ENCODE measurements at regions of chr14 and their contacts with region 1.

Region 1: GRCh38 chr14:24332268-24332993 is 2.4 kb downstream of the ADCY4 start:
- DNase-seq: peak; percentile 94
- H3K4me3 ChIP-seq: peak overlapping the region in 1 of 2 experiments; percentile 30; a peak in 3 of 4 replicates
- H3K27ac ChIP-seq: no peak overlapping the region
- H3K4me1 ChIP-seq: peaks cover 0 to 21% of the 10 kb centered on the region in 2 experiments; a peak in 1 of 4 replicates
- H3K27me3 ChIP-seq: peaks cover 31% of the 10 kb centered on the region
- CTCF ChIP-seq: peak; percentile 68
- EP300 ChIP-seq: no peak
- RAD21 ChIP-seq: peak; percentile 59

Region 2: DNA sequence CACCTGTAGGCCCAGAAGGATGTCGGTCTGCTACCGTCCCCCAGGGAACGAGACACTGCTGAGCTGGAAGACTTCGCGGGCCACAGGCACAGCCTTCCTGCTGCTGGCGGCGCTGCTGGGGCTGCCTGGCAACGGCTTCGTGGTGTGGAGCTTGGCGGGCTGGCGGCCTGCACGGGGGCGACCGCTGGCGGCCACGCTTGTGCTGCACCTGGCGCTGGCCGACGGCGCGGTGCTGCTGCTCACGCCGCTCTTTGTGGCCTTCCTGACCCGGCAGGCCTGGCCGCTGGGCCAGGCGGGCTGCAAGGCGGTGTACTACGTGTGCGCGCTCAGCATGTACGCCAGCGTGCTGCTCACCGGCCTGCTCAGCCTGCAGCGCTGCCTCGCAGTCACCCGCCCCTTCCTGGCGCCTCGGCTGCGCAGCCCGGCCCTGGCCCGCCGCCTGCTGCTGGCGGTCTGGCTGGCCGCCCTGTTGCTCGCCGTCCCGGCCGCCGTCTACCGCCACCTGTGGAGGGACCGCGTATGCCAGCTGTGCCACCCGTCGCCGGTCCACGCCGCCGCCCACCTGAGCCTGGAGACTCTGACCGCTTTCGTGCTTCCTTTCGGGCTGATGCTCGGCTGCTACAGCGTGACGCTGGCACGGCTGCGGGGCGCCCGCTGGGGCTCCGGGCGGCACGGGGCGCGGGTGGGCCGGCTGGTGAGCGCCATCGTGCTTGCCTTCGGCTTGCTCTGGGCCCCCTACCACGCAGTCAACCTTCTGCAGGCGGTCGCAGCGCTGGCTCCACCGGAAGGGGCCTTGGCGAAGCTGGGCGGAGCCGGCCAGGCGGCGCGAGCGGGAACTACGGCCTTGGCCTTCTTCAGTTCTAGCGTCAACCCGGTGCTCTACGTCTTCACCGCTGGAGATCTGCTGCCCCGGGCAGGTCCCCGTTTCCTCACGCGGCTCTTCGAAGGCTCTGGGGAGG is 21.5 kb before region 1 on chr14 and contains the start of gene LTB4R:
- CTCF ChIA-PET with region 1: interaction called, 115 read pairs
- POLR2A ChIA-PET with region 1: no interaction called
- DNase-seq: no peak
- H3K4me3 ChIP-seq: no peak within 1 kb of the TSS
- H3K27ac ChIP-seq: no peak within 1 kb of the TSS
- H3K4me1 ChIP-seq: peaks cover 0 to 2% of the 10 kb centered on the region in 2 experiments; a peak in 1 of 4 replicates
- H3K27me3 ChIP-seq: no peaks in the 10 kb centered on the region
- CTCF ChIP-seq: no peak
- EP300 ChIP-seq: no peak
- RAD21 ChIP-seq: no peak
- polyA plus RNA-seq, gene LTB4R: 11.9 and 14.0 TPM in 2 replicates

Region 3: GRCh38 chr14:24315807-24316603 is 16.4 kb before region 1 on chr14:
- CTCF ChIA-PET with region 1: interaction called, 115 read pairs
- POLR2A ChIA-PET with region 1: interaction called, 3 read pairs
- DNase-seq: peak; percentile 60
- H3K4me3 ChIP-seq: no peak overlapping the region
- H3K27ac ChIP-seq: no peak overlapping the region
- H3K4me1 ChIP-seq: peaks cover 0 to 8% of the 10 kb centered on the region in 2 experiments; a peak in 1 of 4 replicates
- H3K27me3 ChIP-seq: peaks cover 12% of the 10 kb centered on the region; the same call in 1 of the 2 replicates
- CTCF ChIP-seq: no peak
- EP300 ChIP-seq: no peak
- RAD21 ChIP-seq: no peak

Region 4: DNA sequence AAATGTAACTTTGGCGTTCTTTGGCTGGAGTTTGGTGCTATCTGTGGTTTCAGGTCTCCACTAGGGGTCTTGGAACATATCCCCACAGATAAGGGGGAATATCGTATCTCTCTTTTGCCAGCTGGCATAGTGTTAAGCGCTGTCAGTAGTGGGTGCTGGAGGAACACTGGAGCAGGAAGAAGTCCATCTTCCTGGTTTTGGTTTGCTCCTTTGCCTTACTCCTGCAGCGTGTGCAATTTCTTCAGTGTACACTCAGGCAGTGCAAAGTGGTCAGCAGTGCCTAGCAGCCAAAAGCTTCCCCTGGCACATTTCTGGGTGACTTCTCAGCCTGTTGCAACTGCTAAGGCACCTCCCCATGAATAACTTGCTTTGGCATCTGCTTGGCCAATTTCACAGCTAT is 19.1 kb after region 1 on chr14:
- CTCF ChIA-PET with region 1: interaction called, 98 read pairs
- POLR2A ChIA-PET with region 1: no interaction called
- DNase-seq: no peak
- H3K4me3 ChIP-seq: no peak overlapping the region
- H3K27ac ChIP-seq: no peak overlapping the region
- H3K4me1 ChIP-seq: no peaks in the 10 kb centered on the region; a peak in 1 of 4 replicates
- H3K27me3 ChIP-seq: peaks cover 64% of the 10 kb centered on the region
- CTCF ChIP-seq: peak; percentile 17; the same call in 1 of the 2 replicates
- EP300 ChIP-seq: no peak
- RAD21 ChIP-seq: peak; percentile 26; the same call in 1 of the 2 replicates

Region 5: DNA sequence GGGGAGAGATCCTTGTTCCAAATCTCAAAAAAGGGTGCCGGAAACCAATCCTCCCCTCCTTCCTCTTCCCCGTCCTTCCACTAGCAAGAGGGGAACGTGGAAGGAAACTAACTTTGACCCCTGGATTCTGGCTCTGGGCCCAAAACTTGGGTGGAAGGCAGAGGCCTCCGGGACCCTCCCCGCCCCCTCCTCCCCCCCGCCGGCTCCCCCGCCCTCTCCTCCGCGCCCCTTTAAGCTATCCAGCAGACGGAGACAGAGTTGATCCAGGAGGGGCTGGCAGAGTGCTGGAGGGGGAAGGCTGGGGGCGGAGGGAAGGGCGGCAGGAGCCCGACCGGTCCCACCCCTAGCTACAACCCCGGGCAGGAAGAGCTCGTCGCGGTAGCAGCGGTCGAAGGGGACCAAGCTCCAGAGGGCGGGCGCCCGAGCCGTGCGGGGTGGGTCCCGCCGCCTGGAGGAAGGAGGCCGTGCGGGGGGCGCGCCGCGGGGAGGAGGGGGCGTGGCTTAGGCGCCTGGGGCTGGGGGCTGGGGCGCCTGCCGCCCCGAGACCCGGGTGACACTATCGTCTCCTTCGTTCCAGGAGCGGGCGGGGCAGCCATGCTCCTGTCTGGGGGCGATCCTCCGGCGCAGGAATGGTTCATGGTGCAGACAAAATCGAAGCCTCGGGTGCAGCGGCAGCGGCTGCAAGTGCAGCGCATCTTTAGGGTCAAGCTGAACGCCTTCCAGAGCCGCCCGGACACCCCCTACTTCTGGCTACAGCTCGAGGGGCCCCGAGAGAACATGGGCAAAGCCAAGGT is 66.4 kb after region 1 on chr14 and contains the start of gene NYNRIN:
- CTCF ChIA-PET with region 1: interaction called, 25 read pairs
- POLR2A ChIA-PET with region 1: interaction called, 3 read pairs
- DNase-seq: peak; percentile 87
- H3K4me3 ChIP-seq: peak within 1 kb of the TSS; percentile 66 to 73
- H3K27ac ChIP-seq: peak within 1 kb of the TSS in 1 of 2 experiments; percentile 72; a peak in 1 of 4 replicates
- H3K4me1 ChIP-seq: peaks cover 0 to 32% of the 10 kb centered on the region in 2 experiments; a peak in 1 of 4 replicates
- H3K27me3 ChIP-seq: no peaks in the 10 kb centered on the region
- CTCF ChIP-seq: no peak
- EP300 ChIP-seq: no peak
- RAD21 ChIP-seq: no peak
- polyA plus RNA-seq, gene NYNRIN: 4.7 and 4.8 TPM in 2 replicates

Region 6: DNA sequence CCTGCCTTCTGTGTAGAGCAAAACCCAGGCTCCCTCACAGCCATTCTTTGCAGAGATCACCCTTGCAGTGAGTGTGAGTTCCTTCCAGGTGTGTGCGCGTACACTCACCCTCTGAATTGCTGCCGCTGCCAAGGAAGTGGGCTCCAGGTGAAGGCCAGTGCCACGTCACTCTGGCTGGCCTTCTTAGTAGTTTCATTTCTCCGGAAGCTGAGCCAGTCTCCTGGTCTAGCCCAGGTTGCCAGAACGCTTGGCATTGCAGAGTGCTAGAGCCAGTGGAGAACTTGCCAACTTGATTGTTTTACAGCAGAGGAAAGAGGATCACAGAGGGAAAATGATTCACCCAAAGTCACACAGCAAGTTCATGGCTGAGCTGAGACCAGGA is 86.1 kb after region 1 on chr14:
- CTCF ChIA-PET with region 1: interaction called, 11 read pairs
- POLR2A ChIA-PET with region 1: no interaction called
- DNase-seq: no peak
- H3K4me3 ChIP-seq: no peak overlapping the region
- H3K27ac ChIP-seq: no peak overlapping the region
- H3K4me1 ChIP-seq: no peaks in the 10 kb centered on the region; a peak in 1 of 4 replicates
- H3K27me3 ChIP-seq: 0 out of 2 replicates have a peak, but pooled peaks cover 5% of the 10 kb centered on the region
- CTCF ChIP-seq: no peak
- EP300 ChIP-seq: no peak
- RAD21 ChIP-seq: no peak

Region 7: GRCh38 chr14:24425704-24426103 is 93.3 kb after region 1 on chr14:
- CTCF ChIA-PET with region 1: interaction called, 445 read pairs
- POLR2A ChIA-PET with region 1: interaction called, 16 read pairs
- DNase-seq: no peak
- H3K4me3 ChIP-seq: no peak overlapping the region
- H3K27ac ChIP-seq: no peak overlapping the region
- H3K4me1 ChIP-seq: peaks cover 11 to 20% of the 10 kb centered on the region in 2 experiments; a peak in 3 of 4 replicates
- H3K27me3 ChIP-seq: no peaks in the 10 kb centered on the region
- CTCF ChIP-seq: no peak
- EP300 ChIP-seq: no peak
- RAD21 ChIP-seq: no peak

Measured in SK-N-SH (cell line).